Activated CD4-positive, alpha-beta memory T cell treated with anti-CD3 and anti-CD28 coated beads, Interleukin-2, amount 10 ng/mL, durations not matched to agents 7 days and 5 days (primary cell): ENCODE measurements at regions of chr3 and their contacts with region 1.

Region 1: DNA sequence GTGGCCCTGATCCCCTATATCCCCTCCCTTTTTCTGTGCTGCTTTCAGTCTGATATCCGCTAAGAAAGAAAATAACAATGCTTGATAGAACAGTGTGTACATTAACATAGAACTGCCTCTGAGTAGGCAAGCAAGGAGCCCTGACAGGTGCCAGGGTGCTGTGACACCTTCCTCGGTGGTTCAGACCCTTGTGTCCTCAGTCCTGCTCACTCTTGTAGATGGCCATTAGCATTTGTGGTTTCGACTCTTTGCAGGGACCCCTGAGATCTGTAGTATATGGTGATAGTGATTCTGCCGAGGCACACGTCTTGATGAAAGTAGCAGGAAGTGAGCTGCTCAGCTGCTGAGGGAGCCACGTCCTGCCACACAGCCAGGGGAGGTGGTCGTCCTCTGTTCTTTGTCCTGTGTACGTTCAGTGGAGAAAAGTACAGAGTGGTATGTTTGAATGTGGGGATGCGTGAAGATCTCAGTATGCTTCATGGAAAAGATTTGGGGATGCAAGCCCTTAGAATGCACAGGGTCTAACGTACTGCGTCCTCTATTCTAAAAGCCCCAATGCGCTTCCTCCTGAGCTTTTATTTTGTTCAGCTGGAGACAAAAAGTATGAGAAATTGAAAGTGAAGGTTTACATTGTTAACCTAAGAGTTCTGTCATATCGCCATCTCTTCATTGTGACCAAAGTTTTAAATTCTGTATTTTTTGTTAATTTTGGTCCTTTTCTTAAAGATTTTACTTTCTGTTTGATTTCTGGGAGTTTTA is 35.4 kb downstream of the PXYLP1 start:
- DNase-seq: peak; percentile 52
- H3K4me3 Mint-ChIP-seq: peak overlapping the region; percentile 76
- H3K27ac Mint-ChIP-seq: peak overlapping the region; percentile 92
- H3K4me1 Mint-ChIP-seq: peaks cover 43% of the 10 kb centered on the region
- H3K27me3 Mint-ChIP-seq: no peaks in the 10 kb centered on the region

Region 2: DNA sequence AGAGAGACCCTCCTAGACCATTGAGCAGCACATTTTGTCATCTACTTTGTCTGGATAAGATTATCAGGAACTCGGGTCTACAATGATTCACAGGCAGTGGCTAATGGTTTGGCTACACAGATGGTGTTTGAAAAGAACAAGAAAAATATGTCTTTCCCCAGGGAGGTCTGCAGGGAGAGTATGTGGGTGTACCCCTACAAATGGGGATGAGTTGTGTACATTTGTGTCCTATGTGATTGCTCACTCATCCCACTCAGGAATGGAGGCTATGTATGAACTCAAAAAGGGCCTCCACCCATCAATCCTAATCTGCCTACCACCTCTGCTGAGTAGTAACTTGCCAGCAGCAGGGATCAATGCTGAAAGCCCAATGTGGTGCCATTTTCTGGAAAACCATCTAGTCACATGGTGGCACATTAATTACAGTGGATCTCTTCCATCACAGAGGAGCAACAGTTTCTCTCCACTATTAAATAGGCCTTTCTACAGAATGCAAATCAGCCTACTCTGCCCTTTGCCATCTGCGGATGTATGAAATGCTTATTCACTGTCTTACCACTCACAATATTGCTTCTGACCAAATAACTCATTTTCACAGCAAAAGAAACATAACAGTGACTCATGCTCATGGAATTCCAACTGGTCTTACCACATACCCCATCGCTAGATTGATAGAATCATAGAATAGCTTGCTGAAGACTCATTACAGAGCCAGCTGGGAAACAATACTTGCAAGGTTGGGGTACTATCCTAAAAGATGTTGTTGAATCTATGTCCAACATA is 637.4 kb before region 1 on chr3:
- CTCF ChIA-PET with region 1: no interaction called
- POLR2A ChIA-PET with region 1: no interaction called
- DNase-seq: no peak
- H3K4me3 Mint-ChIP-seq: no peak overlapping the region
- H3K27ac Mint-ChIP-seq: no peak overlapping the region
- H3K4me1 Mint-ChIP-seq: no peaks in the 10 kb centered on the region
- H3K27me3 Mint-ChIP-seq: no peaks in the 10 kb centered on the region

Region 3: GRCh38 chr3:141204343-141204742 is 62.6 kb before region 1 on chr3:
- CTCF ChIA-PET with region 1: no interaction called
- POLR2A ChIA-PET with region 1: no interaction called
- DNase-seq: no peak
- H3K4me3 Mint-ChIP-seq: no peak overlapping the region
- H3K27ac Mint-ChIP-seq: no peak overlapping the region
- H3K4me1 Mint-ChIP-seq: no peaks in the 10 kb centered on the region
- H3K27me3 Mint-ChIP-seq: peaks cover 37% of the 10 kb centered on the region

Region 4: GRCh38 chr3:141255846-141256261 is 11.1 kb before region 1 on chr3:
- CTCF ChIA-PET with region 1: interaction called, 4 read pairs
- POLR2A ChIA-PET with region 1: interaction called, 14 read pairs
- DNase-seq: peak; percentile 50
- H3K4me3 Mint-ChIP-seq: no peak overlapping the region
- H3K27ac Mint-ChIP-seq: no peak overlapping the region
- H3K4me1 Mint-ChIP-seq: peaks cover 21% of the 10 kb centered on the region
- H3K27me3 Mint-ChIP-seq: no peaks in the 10 kb centered on the region